Posterior cingulate gyrus (tissue), 11 donors: ENCODE measurements at regions of chr12 and their contacts with region 1.

Region 1: DNA sequence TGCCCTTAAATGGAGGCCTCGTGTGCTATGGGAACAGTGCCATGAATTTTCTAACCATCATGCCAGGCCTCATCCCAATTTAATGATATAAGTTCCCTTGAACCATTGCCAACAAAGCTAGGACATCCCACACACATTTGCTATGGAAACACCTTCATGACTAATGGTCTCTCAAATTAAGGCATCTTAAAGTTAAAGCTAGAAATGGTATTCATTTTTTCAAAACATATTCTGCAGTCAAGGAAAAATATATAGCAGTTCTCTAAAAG is 117.3 kb downstream of the BTG1 start:
- DNase-seq: no peak

Region 2: DNA sequence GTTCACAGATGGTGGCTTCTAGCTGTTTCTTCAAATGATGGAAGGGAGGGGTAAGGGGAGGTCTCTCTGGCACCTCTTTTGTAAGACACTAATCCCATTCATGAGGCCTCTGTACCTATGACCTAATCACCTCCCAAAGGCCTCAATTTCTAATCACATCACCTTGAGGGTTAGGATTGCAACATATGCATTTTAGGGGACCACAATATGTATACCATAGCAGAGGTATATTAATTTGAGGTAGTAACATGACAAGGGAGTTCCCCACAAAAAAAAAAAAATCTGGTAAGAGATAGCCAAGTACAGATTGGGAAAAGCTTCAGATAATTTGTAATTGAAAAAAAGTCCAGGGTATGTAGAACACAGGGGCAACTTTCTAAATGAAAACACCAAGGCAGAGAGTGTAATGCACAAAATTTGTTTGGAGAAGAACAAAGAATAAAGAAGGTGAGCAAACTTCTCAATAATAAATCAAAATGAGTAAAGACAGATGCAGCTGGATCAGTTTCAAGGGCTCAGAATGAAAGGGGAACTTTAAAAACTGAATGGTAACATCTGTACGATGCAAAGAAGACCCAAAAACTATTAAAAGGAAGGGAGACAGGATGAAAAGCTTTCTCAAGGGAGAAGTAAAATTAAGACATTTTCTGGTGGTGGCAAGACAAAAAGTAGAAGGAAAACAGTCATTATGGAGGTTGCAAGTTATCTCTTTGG is 720.3 kb before region 1 on chr12:
- intact Hi-C with region 1: no loop called
- DNase-seq: no peak

Region 3: GRCh38 chr12:91577586-91578539 is 450.5 kb before region 1 on chr12:
- intact Hi-C with region 1: loop called (anchors 10 kb)
- DNase-seq: no peak

Region 4: GRCh38 chr12:91896286-91897024 is 131.9 kb before region 1 on chr12:
- intact Hi-C with region 1: no loop called
- DNase-seq: no peak